ENCODE measurements at regions of chr16 and their contacts with region 1.

Region 1: GRCh38 chr16:87324411-87325275 is 7.5 kb upstream of the C16orf95 start:
- DNase-seq: peak in 1 of 2 donors; percentile 79
- H3K4me3 ChIP-seq: no peak overlapping the region
- CTCF ChIP-seq: no peak
- POLR2A ChIP-seq: no peak

Region 2: GRCh38 chr16:87305505-87306391 is 18.9 kb before region 1 on chr16:
- intact Hi-C with region 1: loop called (anchors 1 kb)
- DNase-seq: no peak
- H3K4me3 ChIP-seq: no peak overlapping the region
- CTCF ChIP-seq: no peak
- POLR2A ChIP-seq: no peak

Region 3: DNA sequence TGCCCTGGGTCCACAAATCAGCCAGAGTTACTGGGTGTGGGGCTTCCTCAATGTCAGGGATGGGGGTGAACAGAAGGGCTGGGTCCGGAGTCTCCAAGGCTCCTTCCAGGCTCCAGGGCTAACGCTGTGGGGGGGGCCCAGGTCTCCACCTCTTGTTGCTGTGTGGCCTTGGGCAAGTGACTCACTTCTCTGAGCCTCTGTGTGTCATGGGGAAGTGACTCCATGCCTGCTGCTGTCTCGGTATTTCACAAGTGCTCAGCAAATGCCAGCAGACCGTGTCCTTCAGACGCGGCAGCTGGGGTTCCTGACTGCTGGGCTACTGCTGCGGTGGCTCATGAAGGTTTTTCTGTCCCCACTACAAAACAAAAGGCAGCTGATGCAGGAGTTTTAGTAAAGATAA is 304.3 kb after region 1 on chr16:
- intact Hi-C with region 1: no loop called
- DNase-seq: no peak
- H3K4me3 ChIP-seq: no peak overlapping the region
- CTCF ChIP-seq: no peak
- POLR2A ChIP-seq: no peak